Mammary epithelial cell (primary cell): ENCODE measurements at regions of chr5 and their contacts with region 1.

Region 1: DNA sequence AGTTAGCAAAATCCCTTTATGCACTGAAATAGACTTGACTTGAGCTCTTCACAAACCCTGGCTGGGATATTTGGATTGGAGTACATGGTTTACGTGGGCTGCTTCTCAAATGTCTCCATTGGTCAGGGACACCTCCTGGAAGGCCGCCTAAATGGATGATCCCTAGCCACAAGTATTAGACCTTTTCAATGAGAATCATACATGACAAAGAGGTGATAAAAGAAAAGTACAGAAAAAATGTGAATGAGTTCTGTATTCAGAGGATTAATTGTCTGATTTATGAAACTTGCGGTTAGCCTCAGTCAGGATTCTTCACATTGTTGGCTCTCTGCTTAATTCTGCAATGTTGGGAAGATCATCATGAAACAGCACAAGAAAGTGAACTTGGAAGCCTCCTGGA is 752.8 kb upstream of the ADAMTS16 start:
- DNase-seq: peak; percentile 98
- H3K4me3 ChIP-seq: no peak overlapping the region
- H3K27ac ChIP-seq: peak overlapping the region; percentile 82
- H3K4me1 ChIP-seq: peaks cover 16% of the 10 kb centered on the region
- H3K27me3 ChIP-seq: no peaks in the 10 kb centered on the region
- CTCF ChIP-seq: no peak

Region 2: GRCh38 chr5:3310541-3311261 is 1076.6 kb before region 1 on chr5:
- CTCF ChIA-PET with region 1: no interaction called
- dilution Hi-C with region 1: no loop called
- in situ Hi-C with region 1: no loop called
- intact Hi-C with region 1: loop called (anchors 2 kb)
- DNase-seq: peak; percentile 99
- H3K4me3 ChIP-seq: no peak overlapping the region
- H3K27ac ChIP-seq: peak overlapping the region; percentile 98
- H3K4me1 ChIP-seq: peaks cover 25% of the 10 kb centered on the region
- H3K27me3 ChIP-seq: no peaks in the 10 kb centered on the region
- CTCF ChIP-seq: no peak

Region 3: DNA sequence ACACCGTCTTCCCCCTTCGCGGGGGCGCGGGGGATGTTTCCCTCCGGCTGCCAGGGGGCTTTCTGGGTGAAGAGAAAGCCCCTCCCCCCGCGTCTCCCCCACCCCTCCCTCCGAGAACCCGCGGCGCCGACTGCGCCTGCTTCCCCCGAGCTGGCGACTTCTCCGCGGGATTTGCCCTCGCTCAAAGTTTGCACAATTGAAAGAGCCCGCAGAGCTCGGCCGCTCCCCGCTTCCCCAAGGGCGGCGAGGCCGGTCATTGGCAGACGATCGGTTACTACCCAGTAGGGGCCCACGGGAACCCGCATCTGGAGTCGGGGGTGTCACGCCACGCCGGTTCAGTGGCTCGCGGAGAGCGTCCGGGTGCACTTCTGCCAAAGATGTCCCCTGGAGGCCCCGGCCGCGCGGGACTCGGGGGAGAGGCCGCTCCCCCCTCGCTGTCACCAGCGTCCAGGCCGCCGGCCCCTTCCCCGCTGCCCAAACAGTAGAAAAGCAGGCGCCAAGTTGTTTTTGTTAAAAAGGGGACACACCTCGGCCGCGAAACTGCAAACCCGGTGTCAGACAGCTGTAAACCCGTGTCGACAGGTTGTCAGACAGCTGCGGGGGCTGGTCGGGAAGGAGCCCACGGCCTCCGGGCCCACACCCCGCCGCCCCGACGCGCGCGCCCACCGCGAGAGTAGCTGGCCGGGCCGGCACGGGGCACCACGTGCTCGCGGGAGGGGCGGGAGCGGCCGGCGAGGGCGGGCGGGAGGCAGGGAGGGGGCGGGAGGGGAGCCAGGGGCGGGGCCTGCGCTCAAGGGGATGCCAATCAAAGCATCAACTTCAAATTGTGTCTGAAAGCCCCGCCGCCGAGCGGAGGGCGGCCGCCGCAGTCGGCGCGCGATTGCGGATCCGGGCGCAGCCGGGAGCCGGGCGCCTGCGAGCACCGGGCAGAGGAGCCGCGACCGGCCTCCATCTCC is 792.0 kb before region 1 on chr5 and contains the start of gene IRX1:
- CTCF ChIA-PET with region 1: no interaction called
- dilution Hi-C with region 1: no loop called
- in situ Hi-C with region 1: no loop called
- intact Hi-C with region 1: loop called (anchors 5 kb)
- DNase-seq: peak; percentile 73
- H3K4me3 ChIP-seq: peak within 1 kb of the TSS; percentile 82 to 100 (median 97)
- H3K27ac ChIP-seq: peak within 1 kb of the TSS; percentile 96
- H3K4me1 ChIP-seq: peaks cover 14% of the 10 kb centered on the region
- H3K27me3 ChIP-seq: no peaks in the 10 kb centered on the region
- CTCF ChIP-seq: no peak
- total RNA-seq, gene IRX1: 29.8 to 200 TPM

Region 4: GRCh38 chr5:4348919-4349318 is 38.4 kb before region 1 on chr5:
- CTCF ChIA-PET with region 1: no interaction called
- dilution Hi-C with region 1: no loop called
- in situ Hi-C with region 1: no loop called
- intact Hi-C with region 1: loop called (anchors 1 kb)
- DNase-seq: peak; percentile 62
- H3K4me3 ChIP-seq: no peak overlapping the region
- H3K27ac ChIP-seq: peak overlapping the region; percentile 37
- H3K4me1 ChIP-seq: peaks cover 11% of the 10 kb centered on the region
- H3K27me3 ChIP-seq: no peaks in the 10 kb centered on the region
- CTCF ChIP-seq: no peak

Region 5: DNA sequence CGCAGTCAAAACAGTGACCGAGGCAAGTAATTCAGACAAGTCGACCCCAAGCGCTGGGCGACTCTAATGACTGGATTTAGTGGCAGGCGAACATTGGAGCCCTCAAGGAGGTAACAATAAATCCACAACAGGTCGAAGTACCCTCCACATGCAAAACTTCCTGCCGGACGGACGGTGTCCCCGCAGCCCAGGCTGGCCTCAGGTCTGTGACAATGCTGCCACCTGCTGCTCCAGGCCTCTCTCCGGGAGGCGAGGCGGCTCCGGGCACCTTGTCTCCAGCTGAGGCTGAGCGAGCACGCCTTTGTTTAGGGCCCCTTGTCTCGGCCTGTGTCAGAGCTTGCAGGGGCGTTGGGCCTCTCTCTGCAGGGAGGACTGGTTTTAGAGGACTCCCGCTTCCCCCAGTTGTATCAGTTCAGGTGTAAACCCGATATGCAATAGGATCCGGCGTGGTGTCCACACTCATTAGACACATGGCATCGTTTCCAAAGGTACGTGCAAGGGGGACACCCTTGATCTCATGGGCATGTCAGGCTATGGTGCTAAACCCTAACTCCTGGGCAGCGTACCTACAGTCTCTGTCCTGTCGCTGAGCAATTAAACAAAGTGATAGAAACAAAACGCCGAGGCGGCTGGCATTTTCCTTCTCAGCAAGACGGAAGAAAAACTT is 124.8 kb after region 1 on chr5:
- CTCF ChIA-PET with region 1: no interaction called
- dilution Hi-C with region 1: no loop called
- in situ Hi-C with region 1: no loop called
- intact Hi-C with region 1: loop called (anchors 5 kb)
- DNase-seq: peak; percentile 65
- H3K4me3 ChIP-seq: peak overlapping the region; percentile 6 to 31 (median 28)
- H3K27ac ChIP-seq: peak overlapping the region; percentile 34
- H3K4me1 ChIP-seq: peaks cover 56% of the 10 kb centered on the region
- H3K27me3 ChIP-seq: no peaks in the 10 kb centered on the region
- CTCF ChIP-seq: peak; percentile 72 to 89

Region 6: GRCh38 chr5:4563400-4563799 is 176.1 kb after region 1 on chr5:
- CTCF ChIA-PET with region 1: no interaction called
- dilution Hi-C with region 1: no loop called
- in situ Hi-C with region 1: no loop called
- intact Hi-C with region 1: loop called (anchors 10 kb)
- DNase-seq: peak; percentile 50
- H3K4me3 ChIP-seq: no peak overlapping the region
- H3K27ac ChIP-seq: no peak overlapping the region
- H3K4me1 ChIP-seq: no peaks in the 10 kb centered on the region
- H3K27me3 ChIP-seq: no peaks in the 10 kb centered on the region
- CTCF ChIP-seq: peak; percentile 88 to 89

Region 7: DNA sequence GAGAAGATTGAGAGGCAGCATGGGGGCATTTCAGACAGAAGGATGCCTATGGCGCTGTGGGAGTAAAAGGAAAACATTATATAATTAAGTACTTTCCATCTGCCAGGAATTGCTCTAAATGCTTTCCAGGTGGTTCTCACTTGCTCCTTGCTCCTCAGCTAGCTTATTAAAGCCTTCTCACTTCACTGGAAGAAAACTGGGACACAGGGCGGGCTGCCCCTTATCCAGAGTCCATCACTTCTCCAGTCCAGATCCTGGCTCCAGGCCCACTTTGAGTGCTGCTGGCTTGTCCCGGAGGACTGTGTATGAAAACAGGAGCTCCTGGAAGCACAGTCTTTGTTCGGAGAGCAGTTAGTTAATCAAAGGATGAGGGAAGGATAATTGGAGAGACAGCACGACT is 343.0 kb after region 1 on chr5:
- CTCF ChIA-PET with region 1: no interaction called
- dilution Hi-C with region 1: no loop called
- in situ Hi-C with region 1: no loop called
- intact Hi-C with region 1: no loop called
- DNase-seq: no peak
- H3K4me3 ChIP-seq: no peak overlapping the region
- H3K27ac ChIP-seq: no peak overlapping the region
- H3K4me1 ChIP-seq: no peaks in the 10 kb centered on the region
- H3K27me3 ChIP-seq: no peaks in the 10 kb centered on the region
- CTCF ChIP-seq: no peak